A673 (cell line): ENCODE measurements at regions of chr5 and their contacts with region 1.

Region 1: GRCh38 chr5:945691-946551 is 53.2 kb downstream of the TRIP13 start:
- DNase-seq: no peak
- H3K4me3 ChIP-seq: no peak overlapping the region
- H3K27ac ChIP-seq: no peak overlapping the region
- H3K4me1 ChIP-seq: peaks cover 21% of the 10 kb centered on the region
- H3K27me3 ChIP-seq: peaks cover 4% of the 10 kb centered on the region
- CTCF ChIP-seq: no peak

Region 2: GRCh38 chr5:1019001-1019905 is 73.3 kb after region 1 on chr5:
- CTCF ChIA-PET with region 1: no interaction called
- POLR2A ChIA-PET with region 1: interaction called, 10 read pairs
- intact Hi-C with region 1: no loop called
- DNase-seq: no peak
- H3K4me3 ChIP-seq: no peak overlapping the region
- H3K27ac ChIP-seq: peak overlapping the region; percentile 71
- H3K4me1 ChIP-seq: peaks cover 23% of the 10 kb centered on the region
- H3K27me3 ChIP-seq: no peaks in the 10 kb centered on the region
- CTCF ChIP-seq: no peak